CD4-positive, alpha-beta memory T cell (primary cell): ENCODE measurements at regions of chr14 and their contacts with region 1.

Region 1: GRCh38 chr14:77053046-77053841 is 24.7 kb upstream of the IRF2BPL start:
- DNase-seq: peak; percentile 68 to 75 (median 69)
- H3K4me3 ChIP-seq: no peak overlapping the region
- H3K4me3 Mint-ChIP-seq: peak overlapping the region in 1 of 8 donors; percentile 51
- H3K27ac ChIP-seq: no peak overlapping the region
- H3K27ac Mint-ChIP-seq: peak overlapping the region in 6 of 7 donors; percentile 24 to 79 (median 49)
- H3K4me1 ChIP-seq: peaks cover 25% of the 10 kb centered on the region
- H3K4me1 Mint-ChIP-seq: peaks cover 16 to 36% (median 22%) of the 10 kb centered on the region in 4 donors
- H3K27me3 ChIP-seq: no peaks in the 10 kb centered on the region
- H3K27me3 Mint-ChIP-seq: no peaks in the 10 kb centered on the region

Region 2: GRCh38 chr14:76947078-76947837 is 106.0 kb before region 1 on chr14:
- CTCF ChIA-PET with region 1: interaction called, 50 read pairs
- POLR2A ChIA-PET with region 1: interaction called, 3 read pairs
- intact Hi-C with region 1: loop called (anchors 1 kb)
- DNase-seq: peak; percentile 68 to 82 (median 72)
- H3K4me3 ChIP-seq: peak overlapping the region in 1 of 2 donors; percentile 19
- H3K4me3 Mint-ChIP-seq: peak overlapping the region in 7 of 8 donors; percentile 4 to 65 (median 57)
- H3K27ac ChIP-seq: peak overlapping the region; percentile 33
- H3K27ac Mint-ChIP-seq: peak overlapping the region; percentile 37 to 93 (median 87)
- H3K4me1 ChIP-seq: peaks cover 20% of the 10 kb centered on the region
- H3K4me1 Mint-ChIP-seq: peaks cover 16 to 39% (median 24%) of the 10 kb centered on the region in 4 donors
- H3K27me3 ChIP-seq: no peaks in the 10 kb centered on the region
- H3K27me3 Mint-ChIP-seq: no peaks in the 10 kb centered on the region

Region 3: GRCh38 chr14:76956316-76957090 is 96.7 kb before region 1 on chr14:
- CTCF ChIA-PET with region 1: interaction called, 37 read pairs
- POLR2A ChIA-PET with region 1: interaction called, 23 read pairs
- intact Hi-C with region 1: no loop called
- DNase-seq: peak; percentile 83 to 97 (median 85)
- H3K4me3 ChIP-seq: peak overlapping the region; percentile 61 to 64
- H3K4me3 Mint-ChIP-seq: peak overlapping the region; percentile 81 to 96 (median 88)
- H3K27ac ChIP-seq: peak overlapping the region; percentile 94
- H3K27ac Mint-ChIP-seq: peak overlapping the region; percentile 87 to 99 (median 98)
- H3K4me1 ChIP-seq: peaks cover 72% of the 10 kb centered on the region
- H3K4me1 Mint-ChIP-seq: peaks cover 37 to 75% (median 53%) of the 10 kb centered on the region in 4 donors
- H3K27me3 ChIP-seq: no peaks in the 10 kb centered on the region
- H3K27me3 Mint-ChIP-seq: no peaks in the 10 kb centered on the region

Region 4: GRCh38 chr14:77023001-77023996 is 29.9 kb before region 1 on chr14:
- CTCF ChIA-PET with region 1: interaction called, 65 read pairs
- POLR2A ChIA-PET with region 1: interaction called, 456 read pairs
- intact Hi-C with region 1: loop called (anchors 1 kb)
- DNase-seq: no peak
- H3K4me3 ChIP-seq: peak overlapping the region in 1 of 2 donors; percentile 9
- H3K4me3 Mint-ChIP-seq: peak overlapping the region; percentile 30 to 73 (median 65)
- H3K27ac ChIP-seq: no peak overlapping the region
- H3K27ac Mint-ChIP-seq: peak overlapping the region; percentile 66 to 98 (median 83)
- H3K4me1 ChIP-seq: peaks cover 52% of the 10 kb centered on the region
- H3K4me1 Mint-ChIP-seq: peaks cover 26 to 49% (median 37%) of the 10 kb centered on the region in 4 donors
- H3K27me3 ChIP-seq: no peaks in the 10 kb centered on the region
- H3K27me3 Mint-ChIP-seq: no peaks in the 10 kb centered on the region

Region 5: DNA sequence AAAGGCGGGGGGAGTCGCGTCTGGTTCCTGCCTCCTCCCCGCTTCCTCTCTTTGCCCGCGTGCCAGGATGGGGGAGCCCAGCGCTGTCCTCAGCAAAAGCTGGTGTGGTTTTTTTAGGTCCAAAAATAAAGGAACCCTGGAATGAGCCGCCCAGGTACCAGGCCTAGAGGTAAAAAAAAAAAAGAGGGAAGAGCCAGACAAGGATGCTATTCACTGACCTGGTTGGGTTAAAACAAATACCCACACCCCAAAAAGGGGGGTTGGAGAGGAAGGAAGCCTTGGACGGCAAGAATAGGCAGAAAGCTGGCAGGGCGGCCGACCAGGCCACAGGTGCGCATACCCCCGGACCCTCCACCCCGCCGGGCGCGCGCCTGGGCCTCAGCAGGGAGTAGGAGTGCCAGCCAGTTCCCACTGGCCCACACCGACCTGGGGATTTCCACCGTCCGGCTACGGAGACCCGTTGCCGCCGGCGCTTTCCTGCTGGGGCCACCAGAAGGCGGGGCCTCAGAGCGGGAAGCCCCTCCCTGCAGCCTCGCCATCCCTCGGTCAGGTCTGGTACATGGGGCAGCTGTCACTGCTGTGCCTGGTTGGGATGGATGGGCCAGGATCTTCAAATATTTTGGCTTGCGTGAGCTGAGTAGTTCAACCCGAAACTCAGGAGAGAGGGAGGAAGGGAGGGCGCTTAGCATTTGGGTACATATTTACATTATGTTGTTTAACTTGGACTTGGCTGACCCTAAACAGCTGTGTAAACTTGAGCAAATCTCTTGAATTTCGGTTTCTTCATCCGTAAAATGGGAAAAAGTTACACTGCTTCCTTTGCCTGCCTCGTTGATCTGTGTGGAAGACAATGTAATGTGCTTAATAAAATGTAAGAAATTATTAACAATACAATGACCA is 19.4 kb before region 1 on chr14:
- CTCF ChIA-PET with region 1: interaction called, 65 read pairs
- POLR2A ChIA-PET with region 1: interaction called, 456 read pairs
- intact Hi-C with region 1: no loop called
- DNase-seq: peak; percentile 63 to 90 (median 72)
- H3K4me3 ChIP-seq: peak overlapping the region; percentile 71 to 84
- H3K4me3 Mint-ChIP-seq: peak overlapping the region; percentile 91 to 94 (median 92)
- H3K27ac ChIP-seq: peak overlapping the region; percentile 98
- H3K27ac Mint-ChIP-seq: peak overlapping the region; percentile 94 to 99 (median 98)
- H3K4me1 ChIP-seq: peaks cover 93% of the 10 kb centered on the region
- H3K4me1 Mint-ChIP-seq: peaks cover 53 to 87% (median 70%) of the 10 kb centered on the region in 4 donors
- H3K27me3 ChIP-seq: no peaks in the 10 kb centered on the region
- H3K27me3 Mint-ChIP-seq: no peaks in the 10 kb centered on the region

Region 6: DNA sequence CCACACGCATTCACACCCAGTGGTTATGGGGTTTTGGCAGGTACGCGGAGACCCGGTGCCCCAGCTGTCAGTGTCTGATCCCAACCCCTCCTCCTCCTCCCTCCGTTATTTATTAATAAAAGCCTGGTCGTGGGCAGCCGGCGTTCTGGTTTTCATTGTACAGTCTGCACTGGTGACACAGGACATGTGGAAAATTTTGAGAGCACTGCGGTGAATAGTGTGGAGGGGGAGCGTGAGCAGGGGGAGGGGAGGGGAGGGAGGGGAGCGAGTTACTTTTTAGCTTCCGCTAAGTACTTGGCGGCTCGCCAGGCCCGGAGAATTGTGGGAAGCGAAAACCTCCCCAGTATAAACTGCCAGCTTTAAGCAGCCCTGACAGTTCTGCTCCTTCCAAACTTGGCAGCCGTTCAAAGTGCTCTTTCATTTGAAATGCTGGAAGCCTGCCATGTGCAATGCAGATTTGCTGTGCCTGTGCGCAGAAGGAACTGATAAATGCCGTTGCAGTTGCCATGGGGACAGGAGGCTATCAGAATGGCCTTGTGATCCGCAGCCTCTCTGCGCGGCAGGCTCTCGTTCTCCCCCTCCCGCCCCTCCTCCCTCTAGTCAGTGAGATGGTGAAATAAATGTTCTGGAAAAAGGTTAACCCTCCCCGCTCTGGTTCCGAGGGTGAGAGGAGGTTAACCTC is 13.0 kb before region 1 on chr14:
- CTCF ChIA-PET with region 1: interaction called, 19 read pairs
- POLR2A ChIA-PET with region 1: interaction called, 456 read pairs
- intact Hi-C with region 1: loop called (anchors 1 kb)
- DNase-seq: peak; percentile 96 to 99 (median 99)
- H3K4me3 ChIP-seq: peak overlapping the region; percentile 8 to 53
- H3K4me3 Mint-ChIP-seq: peak overlapping the region; percentile 84 to 93 (median 86)
- H3K27ac ChIP-seq: peak overlapping the region; percentile 95
- H3K27ac Mint-ChIP-seq: peak overlapping the region; percentile 97 to 100 (median 99)
- H3K4me1 ChIP-seq: peaks cover 94% of the 10 kb centered on the region
- H3K4me1 Mint-ChIP-seq: peaks cover 50 to 97% (median 84%) of the 10 kb centered on the region in 4 donors
- H3K27me3 ChIP-seq: no peaks in the 10 kb centered on the region
- H3K27me3 Mint-ChIP-seq: no peaks in the 10 kb centered on the region